ENCODE measurements at regions of chr16 and their contacts with region 1.

Region 1: DNA sequence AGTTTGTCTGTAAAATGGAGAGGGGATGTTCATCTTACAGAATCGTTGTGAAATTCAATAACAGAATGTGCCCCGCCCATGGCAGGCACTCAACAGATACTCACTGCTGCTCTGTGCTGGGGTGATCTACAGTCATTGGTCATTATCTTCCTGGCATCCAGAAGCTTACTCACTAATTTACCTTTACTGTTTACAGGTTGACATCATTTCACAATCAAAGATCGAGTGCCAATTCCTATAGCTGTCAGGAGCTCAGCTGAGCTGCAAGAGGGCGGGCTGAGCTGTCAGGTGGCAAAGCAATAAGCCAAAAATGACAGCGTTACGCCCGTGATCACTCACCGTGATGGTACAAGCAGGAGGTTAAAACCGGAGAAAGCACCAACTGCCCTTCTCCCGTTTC is 51.2 kb downstream of the LITAF start:
- DNase-seq: peak; percentile 55

Region 2: GRCh38 chr16:10765772-10766171 is 769.7 kb before region 1 on chr16:
- intact Hi-C with region 1: no loop called
- DNase-seq: no peak

Region 3: GRCh38 chr16:11407047-11407982 is 128.2 kb before region 1 on chr16:
- intact Hi-C with region 1: loop called in 1 of 2 experiments (anchors 10 kb)
- DNase-seq: no peak

Region 4: DNA sequence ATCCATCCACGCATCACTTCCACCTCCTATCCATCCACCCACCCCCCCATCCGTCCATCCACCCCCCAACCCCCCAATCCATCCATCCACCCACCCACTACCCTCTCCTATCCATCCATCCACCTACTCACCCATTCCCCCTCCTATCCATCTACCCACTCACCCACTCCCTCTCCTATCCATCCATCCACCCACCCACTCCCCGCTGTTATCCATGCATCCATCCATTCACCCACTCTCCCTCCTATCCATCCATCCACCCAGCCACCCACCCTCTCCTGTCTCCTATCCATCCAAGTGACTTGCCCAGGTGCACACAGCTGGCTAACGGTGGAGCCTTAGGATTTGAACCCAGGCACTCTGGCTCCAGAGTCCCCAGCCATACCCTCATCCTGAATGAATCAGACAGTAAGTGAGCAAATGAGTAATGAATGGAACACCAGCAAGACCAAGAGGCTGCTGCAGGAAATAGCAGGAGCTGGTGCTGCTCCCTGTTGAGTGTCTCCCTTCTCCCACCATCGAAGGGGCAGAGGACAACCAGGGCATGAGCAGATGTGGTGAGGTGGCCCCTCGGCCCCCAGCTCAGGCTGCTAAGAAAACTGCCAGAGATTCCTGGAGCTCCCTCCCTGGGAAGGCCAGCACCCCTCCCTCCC is 11.2 kb before region 1 on chr16:
- intact Hi-C with region 1: no loop called
- DNase-seq: no peak

Region 5: GRCh38 chr16:11604783-11605558 is 69.5 kb after region 1 on chr16:
- intact Hi-C with region 1: loop called in 1 of 2 experiments (anchors 1 kb)
- DNase-seq: peak; percentile 82

Region 6: DNA sequence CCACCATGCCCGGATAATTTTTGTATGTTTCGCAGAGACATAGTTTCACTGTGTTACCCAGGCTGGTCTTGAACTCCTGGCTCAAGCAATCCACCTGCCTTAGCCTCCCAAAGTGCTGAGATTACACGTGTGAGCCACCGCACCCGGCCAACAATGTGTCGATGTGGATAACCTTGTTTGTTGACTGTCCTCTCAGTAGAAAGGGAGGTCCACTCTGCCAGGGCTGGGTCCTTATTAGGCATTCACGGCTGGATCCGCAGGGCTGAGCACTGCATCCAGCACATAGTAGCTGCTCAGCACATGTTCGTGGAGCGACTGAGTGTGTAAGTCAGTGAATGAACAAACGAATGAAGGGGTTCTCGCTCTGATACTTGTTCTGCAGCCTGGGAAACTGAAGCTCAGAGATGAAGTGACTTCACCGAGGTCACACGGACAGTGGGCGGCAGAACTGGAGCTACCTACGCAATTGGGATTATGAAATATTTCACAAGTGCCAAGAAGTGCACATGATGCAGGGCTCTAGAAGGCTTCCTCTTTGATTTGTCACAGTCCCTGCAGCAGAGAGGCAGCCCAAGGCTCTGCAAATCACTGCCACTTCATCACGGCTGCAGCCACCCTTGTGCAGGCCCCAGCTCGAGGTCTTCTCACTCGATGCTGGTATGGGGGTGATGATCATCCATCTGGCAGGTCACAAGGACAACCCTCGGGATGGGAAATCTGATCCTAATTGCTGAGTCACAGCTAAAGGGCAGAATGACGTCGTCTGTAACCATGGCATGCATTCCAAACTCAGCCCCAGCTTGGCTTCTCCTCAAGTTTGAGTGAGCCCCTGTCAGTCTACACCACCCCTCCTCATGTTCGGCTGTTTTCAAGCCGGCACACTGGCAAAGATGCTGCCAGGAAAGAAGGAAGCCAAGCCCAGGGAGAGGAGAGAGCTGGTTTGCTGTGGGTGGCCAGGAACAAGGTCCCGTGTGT is 104.7 kb after region 1 on chr16:
- intact Hi-C with region 1: loop called in 1 of 2 experiments (anchors 5 kb)
- DNase-seq: peak; percentile 92

Region 7: DNA sequence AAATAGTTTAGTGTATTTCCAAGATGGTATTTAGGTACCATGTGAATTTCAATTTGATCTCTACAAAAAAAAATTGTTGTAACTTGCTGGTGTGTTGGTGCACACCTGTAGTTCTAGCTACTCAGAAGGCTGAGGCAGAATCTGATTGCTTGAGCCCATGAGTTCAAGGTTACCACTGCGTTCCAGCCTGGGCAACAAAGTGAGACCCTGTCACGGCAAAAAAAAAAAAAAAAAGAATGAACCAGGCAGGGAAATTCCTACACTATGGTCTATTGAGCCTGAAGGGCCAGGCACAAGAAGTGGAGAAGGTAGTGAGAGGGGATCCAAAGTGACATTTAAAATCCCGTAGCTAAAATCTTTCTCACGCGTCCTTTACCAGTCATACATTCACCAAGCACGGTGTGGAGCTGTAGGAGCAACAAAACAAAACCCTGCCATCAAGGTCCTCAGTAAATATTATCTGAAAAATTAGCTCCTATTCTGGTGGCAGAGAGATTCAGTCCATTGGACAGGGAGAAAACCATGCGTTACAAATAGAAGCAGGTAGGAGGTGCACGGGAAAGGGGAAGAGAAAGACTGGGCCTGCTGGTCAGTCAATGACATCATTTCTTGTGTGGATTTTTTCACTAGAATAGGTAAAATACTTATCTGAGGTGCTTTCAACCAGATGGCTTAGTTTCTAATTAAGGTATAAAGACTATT is 179.9 kb after region 1 on chr16:
- intact Hi-C with region 1: loop called in 1 of 2 experiments (anchors 10 kb)
- DNase-seq: no peak

Measured in posterior vena cava (tissue), 2 donors.